IMR-90 (cell line): ENCODE measurements at regions of chr16 and their contacts with region 1.

Region 1: DNA sequence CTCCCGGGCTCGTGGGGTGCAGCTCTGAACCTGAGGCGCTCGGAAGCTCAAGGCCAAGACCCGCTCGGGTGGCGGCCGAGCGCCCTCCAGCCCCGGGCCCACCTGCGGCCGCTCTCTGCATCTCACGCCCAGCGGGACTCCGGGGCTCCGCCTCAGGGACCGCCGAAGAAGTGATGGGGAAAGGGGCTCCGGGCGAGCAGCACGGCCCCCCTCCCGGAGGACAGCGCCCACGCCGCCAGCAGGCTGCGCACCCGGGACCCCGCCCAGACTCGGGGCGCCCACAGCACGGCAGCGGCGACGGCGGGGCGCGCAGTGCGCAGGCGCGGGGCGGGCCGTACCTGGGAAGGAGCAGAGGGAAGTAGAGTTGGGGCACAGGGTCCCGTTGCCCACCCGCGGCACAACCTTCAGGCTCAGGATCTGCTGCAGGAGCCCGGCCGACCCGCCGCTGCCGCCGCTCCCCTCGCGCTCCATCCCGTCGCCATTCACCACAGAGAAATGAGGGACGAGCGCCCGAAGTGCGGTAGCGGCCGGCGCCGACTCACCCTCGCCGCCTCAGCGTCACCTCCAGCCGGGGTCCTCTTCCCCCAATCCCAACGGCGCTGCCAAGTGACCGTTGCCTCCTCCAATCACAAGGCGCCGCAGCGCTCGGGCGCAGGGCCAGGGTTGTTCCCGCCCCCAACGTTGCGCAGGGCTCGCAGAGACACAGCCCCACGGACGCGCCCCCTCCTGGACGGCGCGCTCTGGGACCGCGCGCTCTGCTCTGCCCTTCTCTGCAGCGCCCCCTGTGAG is at the start of gene TMEM170A:
- DNase-seq: peak; percentile 98
- ATAC-seq: peak; percentile 93
- H3K4me3 ChIP-seq: peak within 1 kb of the TSS; percentile 85
- H3K27ac ChIP-seq: peak within 1 kb of the TSS; percentile 82
- H3K4me1 ChIP-seq: no peaks in the 10 kb centered on the region; the same call in 1 of the 2 replicates
- H3K27me3 ChIP-seq: no peaks in the 10 kb centered on the region
- CTCF ChIP-seq: peak; percentile 100; the same call in 1 of the 2 replicates
- POLR2A ChIP-seq: peak; percentile 90
- RAD21 ChIP-seq: peak; percentile 77
- total RNA-seq, gene TMEM170A: 10.9 and 16.7 TPM in 2 replicates

Region 2: DNA sequence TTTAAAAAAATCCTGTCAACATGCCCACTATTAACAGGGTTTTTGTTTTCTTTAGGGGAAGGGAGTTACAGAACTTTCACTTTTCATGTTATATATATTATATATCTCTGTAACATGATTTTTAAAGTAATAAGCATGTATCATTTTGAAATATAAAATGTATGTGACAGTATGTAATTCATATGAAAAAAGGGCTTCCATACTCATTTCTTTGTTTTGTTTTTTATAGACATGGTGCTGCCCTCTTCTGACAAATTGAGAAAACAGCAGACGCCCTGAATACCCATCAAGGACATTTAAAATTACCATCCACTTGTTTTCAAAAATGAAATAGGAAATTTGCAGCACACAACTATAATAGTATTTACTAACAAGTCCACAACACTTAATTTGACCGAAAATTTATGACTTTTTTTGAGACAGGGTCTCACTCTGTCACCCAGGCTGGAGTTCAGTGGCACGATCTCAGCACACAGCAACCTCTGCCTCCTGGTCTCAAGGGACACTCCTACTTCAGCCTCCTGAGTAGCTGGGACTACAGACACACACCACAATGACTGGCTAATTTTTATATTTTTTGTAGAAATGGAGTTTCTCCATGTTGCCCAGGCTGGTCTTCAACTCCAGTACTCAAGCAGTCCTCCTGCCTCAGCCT is 61.4 kb before region 1 on chr16:
- CTCF ChIA-PET with region 1: no interaction called
- POLR2A ChIA-PET with region 1: no interaction called
- dilution Hi-C with region 1: no loop called
- in situ Hi-C with region 1: no loop called
- intact Hi-C with region 1: loop called (anchors 1 kb)
- DNase-seq: peak; percentile 60
- ATAC-seq: peak; percentile 81
- H3K4me3 ChIP-seq: no peak overlapping the region
- H3K27ac ChIP-seq: no peak overlapping the region
- H3K4me1 ChIP-seq: peaks cover 4% of the 10 kb centered on the region; the same call in 1 of the 2 replicates
- H3K27me3 ChIP-seq: no peaks in the 10 kb centered on the region
- CTCF ChIP-seq: peak; percentile 72
- POLR2A ChIP-seq: no peak
- RAD21 ChIP-seq: peak; percentile 65

Region 3: GRCh38 chr16:75415169-75415905 is 49.0 kb before region 1 on chr16:
- CTCF ChIA-PET with region 1: interaction called, 4 read pairs
- POLR2A ChIA-PET with region 1: interaction called, 12 read pairs
- dilution Hi-C with region 1: no loop called
- in situ Hi-C with region 1: no loop called
- intact Hi-C with region 1: no loop called
- DNase-seq: peak; percentile 69
- ATAC-seq: peak; percentile 66
- H3K4me3 ChIP-seq: no peak overlapping the region
- H3K27ac ChIP-seq: peak overlapping the region; percentile 26
- H3K4me1 ChIP-seq: peaks cover 16% of the 10 kb centered on the region
- H3K27me3 ChIP-seq: no peaks in the 10 kb centered on the region
- CTCF ChIP-seq: no peak
- POLR2A ChIP-seq: no peak
- RAD21 ChIP-seq: no peak

Region 4: DNA sequence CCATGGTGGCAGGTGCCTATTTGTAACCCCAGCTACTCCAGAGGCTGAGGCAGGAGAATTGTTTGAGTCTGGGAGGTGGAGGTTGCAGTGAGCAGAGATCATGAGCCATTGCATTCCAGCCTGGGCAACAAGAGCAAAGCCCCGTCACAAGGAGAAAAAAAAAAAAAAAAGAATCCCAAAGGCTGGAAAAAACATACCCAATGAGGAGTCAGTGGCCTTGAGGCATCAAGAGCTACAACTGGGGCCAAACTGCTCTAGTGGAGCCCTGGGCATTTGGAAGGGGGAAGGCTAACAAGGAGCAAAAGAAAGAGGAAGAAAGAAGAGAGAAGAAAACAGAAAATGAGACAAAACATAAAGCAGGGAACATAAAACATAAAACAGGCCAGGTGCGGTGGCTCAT is 24.0 kb after region 1 on chr16:
- CTCF ChIA-PET with region 1: no interaction called
- POLR2A ChIA-PET with region 1: no interaction called
- dilution Hi-C with region 1: no loop called
- in situ Hi-C with region 1: no loop called
- intact Hi-C with region 1: no loop called
- DNase-seq: no peak
- ATAC-seq: no peak
- H3K4me3 ChIP-seq: no peak overlapping the region
- H3K27ac ChIP-seq: no peak overlapping the region
- H3K4me1 ChIP-seq: no peaks in the 10 kb centered on the region
- H3K27me3 ChIP-seq: peaks cover 6% of the 10 kb centered on the region; the same call in 1 of the 2 replicates
- CTCF ChIP-seq: no peak
- POLR2A ChIP-seq: no peak
- RAD21 ChIP-seq: no peak

Region 5: DNA sequence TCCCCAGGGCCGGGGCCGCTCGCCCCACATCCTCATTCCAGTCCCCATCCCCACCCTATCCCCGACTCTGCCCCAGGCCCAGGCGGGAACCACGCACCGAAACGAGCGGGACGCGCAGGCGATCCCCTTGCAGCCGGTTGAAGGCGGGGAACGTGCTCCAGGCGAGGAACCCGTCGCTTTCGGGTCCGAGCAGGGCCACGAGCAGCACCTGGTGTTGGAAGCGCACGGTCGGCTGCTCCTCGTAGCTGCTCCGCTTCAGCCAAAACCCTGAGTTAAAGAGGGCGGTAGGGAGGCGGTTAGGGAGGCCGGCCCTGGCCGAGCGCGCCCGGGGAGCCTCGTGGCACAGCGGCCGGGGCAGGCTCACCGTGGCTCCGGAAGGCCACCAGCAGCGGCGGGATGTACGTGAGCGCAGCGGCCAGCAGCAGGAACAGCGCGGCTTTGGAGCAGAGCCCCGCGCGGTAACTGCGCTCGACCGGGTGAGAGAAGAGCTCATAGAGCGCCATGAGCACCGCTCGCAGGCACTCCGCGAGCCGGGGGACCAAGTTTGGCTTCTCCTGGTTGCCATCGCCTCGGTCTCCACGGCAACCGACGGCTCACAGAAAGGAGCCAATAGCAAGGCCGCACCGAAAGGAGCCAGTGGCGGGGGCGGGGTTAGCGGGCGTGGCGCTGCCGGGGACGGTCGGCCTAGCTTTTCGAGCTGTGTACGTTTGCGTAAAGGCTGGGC is 91.5 kb after region 1 on chr16 and contains the start of gene TMEM231:
- CTCF ChIA-PET with region 1: no interaction called
- POLR2A ChIA-PET with region 1: no interaction called
- dilution Hi-C with region 1: no loop called
- in situ Hi-C with region 1: no loop called
- intact Hi-C with region 1: loop called (anchors 5 kb)
- DNase-seq: peak; percentile 89
- ATAC-seq: peak; percentile 93
- H3K4me3 ChIP-seq: peak within 1 kb of the TSS; percentile 46
- H3K27ac ChIP-seq: peak within 1 kb of the TSS; percentile 24; the same call in 1 of the 2 replicates
- H3K4me1 ChIP-seq: peaks cover 5% of the 10 kb centered on the region; the same call in 1 of the 2 replicates
- H3K27me3 ChIP-seq: peaks cover 7% of the 10 kb centered on the region
- CTCF ChIP-seq: no peak
- POLR2A ChIP-seq: no peak; the same call in 1 of the 2 replicates
- RAD21 ChIP-seq: no peak
- total RNA-seq, gene TMEM231: 7.5 and 10.6 TPM in 2 replicates

Region 6: GRCh38 chr16:75622761-75623605 is 158.7 kb after region 1 on chr16 and contains the start of gene ADAT1:
- CTCF ChIA-PET with region 1: no interaction called
- POLR2A ChIA-PET with region 1: no interaction called
- dilution Hi-C with region 1: no loop called
- in situ Hi-C with region 1: no loop called
- intact Hi-C with region 1: loop called (anchors 10 kb)
- DNase-seq: peak; percentile 98
- ATAC-seq: peak; percentile 95
- H3K4me3 ChIP-seq: peak within 1 kb of the TSS; percentile 74
- H3K27ac ChIP-seq: peak within 1 kb of the TSS; percentile 71
- H3K4me1 ChIP-seq: peaks cover 5% of the 10 kb centered on the region
- H3K27me3 ChIP-seq: no peaks in the 10 kb centered on the region
- CTCF ChIP-seq: no peak
- POLR2A ChIP-seq: peak; percentile 77; the same call in 1 of the 2 replicates
- RAD21 ChIP-seq: no peak
- total RNA-seq, gene ADAT1: 36.7 and 52.9 TPM in 2 replicates